ENCODE measurements at regions of chr20 and their contacts with region 1.

Region 1: GRCh38 chr20:8535403-8536261 is 403.6 kb downstream of the PLCB1 start:
- DNase-seq: peak in 1 of 2 experiments; percentile 55
- H3K4me3 ChIP-seq: no peak overlapping the region
- H3K4me3 Mint-ChIP-seq: no peak overlapping the region
- H3K27ac Mint-ChIP-seq: no peak overlapping the region
- H3K4me1 ChIP-seq: no peaks in the 10 kb centered on the region
- H3K4me1 Mint-ChIP-seq: no peaks in the 10 kb centered on the region
- H3K27me3 ChIP-seq: no peaks in the 10 kb centered on the region
- H3K27me3 Mint-ChIP-seq: no peaks in the 10 kb centered on the region
- CTCF ChIP-seq: peak; percentile 75 to 77

Region 2: GRCh38 chr20:8583566-8584043 is 48.0 kb after region 1 on chr20:
- CTCF ChIA-PET with region 1: no interaction called
- POLR2A ChIA-PET with region 1: no interaction called
- intact Hi-C with region 1: loop called (anchors 1 kb)
- DNase-seq: peak; percentile 66 to 70
- H3K4me3 ChIP-seq: peak overlapping the region; percentile 5; the same call in 1 of the 2 replicates
- H3K4me3 Mint-ChIP-seq: peak overlapping the region; percentile 38
- H3K27ac Mint-ChIP-seq: peak overlapping the region; percentile 71
- H3K4me1 ChIP-seq: peaks cover 17% of the 10 kb centered on the region
- H3K4me1 Mint-ChIP-seq: peaks cover 16% of the 10 kb centered on the region
- H3K27me3 ChIP-seq: no peaks in the 10 kb centered on the region
- H3K27me3 Mint-ChIP-seq: no peaks in the 10 kb centered on the region
- CTCF ChIP-seq: no peak

Measured in Caco-2 (cell line).